ENCODE measurements at regions of chr13 and their contacts with region 1.

Region 1: DNA sequence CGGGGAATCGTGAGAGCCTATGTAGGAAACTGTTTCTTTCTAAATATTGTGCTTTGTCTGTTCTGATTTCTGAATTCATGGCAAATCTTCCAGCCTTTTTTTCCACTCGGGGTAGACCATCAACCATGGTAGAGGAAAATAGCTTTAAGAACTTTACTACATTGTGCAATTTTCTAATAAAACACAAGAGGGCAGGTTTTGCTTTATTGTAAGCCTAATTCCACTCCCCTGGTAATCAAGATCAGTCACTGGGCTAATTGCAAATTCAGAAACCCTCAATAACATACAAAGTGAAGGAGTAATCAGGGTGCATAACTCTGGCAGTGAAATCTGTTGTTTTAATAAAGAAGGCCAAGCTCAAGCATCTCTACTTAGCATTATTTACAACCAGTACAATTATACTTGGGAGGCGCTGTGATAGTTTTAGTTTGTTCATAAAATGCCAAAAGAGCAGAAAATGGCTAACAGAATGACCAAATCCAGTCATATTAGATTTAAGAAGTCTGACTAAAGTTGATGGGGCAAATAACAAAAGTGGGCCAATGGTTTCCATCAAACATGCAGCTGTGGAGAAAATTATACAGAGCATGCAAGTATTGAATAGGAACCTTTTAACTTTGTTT is 43.8 kb downstream of the DCT start:
- DNase-seq: no peak
- H3K4me3 ChIP-seq: no peak overlapping the region
- H3K27ac ChIP-seq: no peak overlapping the region
- H3K4me1 ChIP-seq: no peaks in the 10 kb centered on the region
- H3K27me3 ChIP-seq: no peaks in the 10 kb centered on the region
- CTCF ChIP-seq: peak; percentile 51

Region 2: GRCh38 chr13:94549232-94550061 is 113.7 kb after region 1 on chr13:
- intact Hi-C with region 1: loop called (anchors 10 kb)
- DNase-seq: peak; percentile 94
- H3K4me3 ChIP-seq: peak overlapping the region; percentile 76
- H3K27ac ChIP-seq: peak overlapping the region; percentile 91
- H3K4me1 ChIP-seq: peaks cover 5% of the 10 kb centered on the region
- H3K27me3 ChIP-seq: no peaks in the 10 kb centered on the region
- CTCF ChIP-seq: no peak

Region 3: DNA sequence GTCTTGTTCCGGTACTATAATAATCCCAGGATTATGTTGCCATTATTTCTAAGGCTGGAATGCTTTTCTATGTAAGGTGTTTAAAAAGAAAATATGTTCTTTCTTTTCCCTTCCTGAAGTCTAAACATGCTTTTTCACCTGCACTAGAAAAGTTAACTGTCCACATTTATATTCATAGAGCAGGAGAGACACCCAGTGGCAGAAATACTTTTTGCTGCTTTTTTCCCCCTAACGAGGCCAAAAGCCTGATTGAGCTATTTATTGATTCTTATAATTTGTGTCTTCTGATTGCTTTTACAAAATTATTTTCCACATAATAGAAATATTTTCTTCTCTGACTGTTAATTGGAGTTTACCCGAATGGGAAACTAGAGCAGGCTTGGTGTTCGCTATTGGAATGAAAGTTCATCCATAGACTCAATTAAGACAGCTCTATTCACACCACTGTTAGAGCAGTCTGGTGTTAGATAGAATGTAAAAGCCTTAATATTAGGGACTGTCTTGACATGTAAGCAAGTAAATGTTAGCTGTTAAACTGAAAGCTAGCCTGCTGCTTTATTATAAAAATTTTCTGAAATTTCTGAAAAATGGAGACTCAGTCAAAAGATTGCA is 181.8 kb after region 1 on chr13:
- intact Hi-C with region 1: loop called (anchors 5 kb)
- DNase-seq: no peak
- H3K4me3 ChIP-seq: no peak overlapping the region
- H3K27ac ChIP-seq: no peak overlapping the region
- H3K4me1 ChIP-seq: no peaks in the 10 kb centered on the region
- H3K27me3 ChIP-seq: no peaks in the 10 kb centered on the region
- CTCF ChIP-seq: peak; percentile 54

Measured in colonic mucosa (tissue), 4 donors.